Activated CD8-positive, alpha-beta T cell treated with anti-CD3 and anti-CD28 coated beads for 36 hours (primary cell): ENCODE measurements at regions of chr10 and their contacts with region 1.

Region 1: DNA sequence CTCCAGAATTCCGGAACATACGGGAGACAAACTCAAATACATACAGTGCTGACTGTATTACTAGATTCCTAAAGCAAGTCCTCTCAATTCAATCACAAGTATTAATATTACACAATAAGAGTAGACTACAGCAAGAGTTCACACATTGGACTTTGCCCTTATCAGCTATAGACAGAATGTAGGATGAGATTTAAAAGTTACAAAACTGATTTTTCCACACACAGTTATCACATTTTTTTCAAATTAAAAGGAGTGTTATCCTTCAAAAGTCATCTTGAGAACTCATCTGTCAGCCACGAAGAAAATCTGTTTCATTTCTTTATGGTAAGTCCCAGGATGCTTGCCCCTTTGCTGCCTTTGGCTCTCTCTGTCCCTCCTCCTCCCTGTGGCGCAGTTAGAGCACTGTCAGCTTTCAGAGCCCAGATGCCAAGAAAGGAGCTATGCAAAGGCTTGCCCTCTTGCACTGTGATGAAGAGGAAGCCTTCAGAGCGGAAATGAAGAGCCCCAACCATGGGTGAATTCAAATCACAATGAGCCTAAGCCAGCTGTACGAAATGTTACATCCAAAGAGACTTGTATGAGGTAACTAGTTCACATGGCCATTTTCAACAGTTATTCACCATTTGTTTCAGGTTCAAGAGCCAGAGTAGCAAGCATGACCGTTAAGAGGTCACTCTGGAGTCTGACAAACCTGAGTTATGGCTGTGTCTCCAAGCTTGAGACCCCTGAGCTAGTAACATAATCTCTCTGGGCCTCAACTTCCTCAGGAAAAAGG is 10.7 kb downstream of the NCOA4 start:
- DNase-seq: peak; percentile 19
- ATAC-seq: no peak
- H3K4me3 Mint-ChIP-seq: no peak overlapping the region
- H3K27ac Mint-ChIP-seq: peak overlapping the region; percentile 73
- H3K4me1 Mint-ChIP-seq: peaks cover 74% of the 10 kb centered on the region
- H3K27me3 Mint-ChIP-seq: no peaks in the 10 kb centered on the region
- CTCF ChIP-seq: no peak

Region 2: GRCh38 chr10:46006219-46006618 is 13.5 kb before region 1 on chr10:
- CTCF ChIA-PET with region 1: interaction called, 5 read pairs
- POLR2A ChIA-PET with region 1: interaction called, 10 read pairs
- intact Hi-C with region 1: no loop called
- DNase-seq: no peak
- ATAC-seq: no peak
- H3K4me3 Mint-ChIP-seq: no peak overlapping the region
- H3K27ac Mint-ChIP-seq: peak overlapping the region; percentile 71
- H3K4me1 Mint-ChIP-seq: no peaks in the 10 kb centered on the region
- H3K27me3 Mint-ChIP-seq: no peaks in the 10 kb centered on the region
- CTCF ChIP-seq: no peak

Region 3: DNA sequence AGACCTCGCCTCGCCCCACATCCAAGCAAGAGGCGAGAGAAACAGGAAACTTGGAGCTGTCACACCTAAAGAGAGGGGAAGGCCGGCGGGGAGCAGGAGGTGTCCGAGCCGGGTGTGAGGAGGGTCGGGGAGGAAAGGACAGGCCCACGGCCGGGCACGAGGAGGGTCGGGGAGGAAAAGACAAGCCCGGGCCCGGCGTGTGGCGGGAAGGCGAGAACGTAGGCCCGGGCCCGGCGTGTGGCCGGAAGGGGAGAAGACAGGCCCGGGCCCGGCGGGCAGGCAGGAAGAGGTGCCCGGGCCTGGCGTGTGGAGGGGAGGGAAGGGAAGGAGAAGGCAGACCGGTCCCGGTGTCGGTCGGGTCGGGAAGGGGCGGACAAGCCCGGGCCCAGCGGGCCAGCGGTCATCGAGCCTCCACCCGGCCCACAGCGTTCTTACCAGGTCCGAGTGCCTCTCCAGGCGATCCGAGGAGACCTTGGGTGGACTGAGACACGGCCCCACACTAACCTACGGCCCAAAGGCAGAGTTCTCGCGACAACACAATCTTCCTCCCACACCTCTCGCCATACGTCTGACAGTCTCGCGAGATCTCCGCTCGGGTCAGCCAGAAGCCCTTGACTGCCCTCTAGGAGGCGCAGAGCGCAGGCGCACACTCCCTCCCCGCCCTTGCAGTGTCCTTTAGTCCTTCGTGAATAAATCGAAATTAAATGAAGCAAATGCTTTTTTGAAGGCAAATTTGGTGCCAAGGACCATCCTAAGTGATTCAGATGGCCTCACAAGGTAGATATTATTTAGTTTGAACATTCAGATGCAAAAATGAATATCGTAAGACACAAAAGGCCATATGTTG is 10.6 kb after region 1 on chr10 and contains the start of gene NCOA4:
- CTCF ChIA-PET with region 1: interaction called, 22 read pairs
- POLR2A ChIA-PET with region 1: interaction called, 5 read pairs
- intact Hi-C with region 1: no loop called
- DNase-seq: peak; percentile 98
- ATAC-seq: peak; percentile 97
- H3K4me3 Mint-ChIP-seq: peak within 1 kb of the TSS; percentile 88
- H3K27ac Mint-ChIP-seq: peak within 1 kb of the TSS; percentile 89
- H3K4me1 Mint-ChIP-seq: peaks cover 43% of the 10 kb centered on the region
- H3K27me3 Mint-ChIP-seq: no peaks in the 10 kb centered on the region
- CTCF ChIP-seq: peak; percentile 51
- total RNA-seq, gene NCOA4: 86.2 to 86.6 TPM

Region 4: GRCh38 chr10:46311501-46312441 is 292.0 kb after region 1 on chr10:
- CTCF ChIA-PET with region 1: no interaction called
- POLR2A ChIA-PET with region 1: no interaction called
- intact Hi-C with region 1: no loop called
- DNase-seq: no peak
- ATAC-seq: no peak
- H3K4me3 Mint-ChIP-seq: no peak overlapping the region
- H3K27ac Mint-ChIP-seq: no peak overlapping the region
- H3K4me1 Mint-ChIP-seq: no peaks in the 10 kb centered on the region
- H3K27me3 Mint-ChIP-seq: no peaks in the 10 kb centered on the region
- CTCF ChIP-seq: no peak